Activated CD4-positive, alpha-beta T cell treated with anti-CD3 and anti-CD28 coated beads, Interleukin-2, amount 10 ng/mL, durations not matched to agents 24 days and 14 days (primary cell): ENCODE measurements at regions of chr5 and their contacts with region 1.

Region 1: DNA sequence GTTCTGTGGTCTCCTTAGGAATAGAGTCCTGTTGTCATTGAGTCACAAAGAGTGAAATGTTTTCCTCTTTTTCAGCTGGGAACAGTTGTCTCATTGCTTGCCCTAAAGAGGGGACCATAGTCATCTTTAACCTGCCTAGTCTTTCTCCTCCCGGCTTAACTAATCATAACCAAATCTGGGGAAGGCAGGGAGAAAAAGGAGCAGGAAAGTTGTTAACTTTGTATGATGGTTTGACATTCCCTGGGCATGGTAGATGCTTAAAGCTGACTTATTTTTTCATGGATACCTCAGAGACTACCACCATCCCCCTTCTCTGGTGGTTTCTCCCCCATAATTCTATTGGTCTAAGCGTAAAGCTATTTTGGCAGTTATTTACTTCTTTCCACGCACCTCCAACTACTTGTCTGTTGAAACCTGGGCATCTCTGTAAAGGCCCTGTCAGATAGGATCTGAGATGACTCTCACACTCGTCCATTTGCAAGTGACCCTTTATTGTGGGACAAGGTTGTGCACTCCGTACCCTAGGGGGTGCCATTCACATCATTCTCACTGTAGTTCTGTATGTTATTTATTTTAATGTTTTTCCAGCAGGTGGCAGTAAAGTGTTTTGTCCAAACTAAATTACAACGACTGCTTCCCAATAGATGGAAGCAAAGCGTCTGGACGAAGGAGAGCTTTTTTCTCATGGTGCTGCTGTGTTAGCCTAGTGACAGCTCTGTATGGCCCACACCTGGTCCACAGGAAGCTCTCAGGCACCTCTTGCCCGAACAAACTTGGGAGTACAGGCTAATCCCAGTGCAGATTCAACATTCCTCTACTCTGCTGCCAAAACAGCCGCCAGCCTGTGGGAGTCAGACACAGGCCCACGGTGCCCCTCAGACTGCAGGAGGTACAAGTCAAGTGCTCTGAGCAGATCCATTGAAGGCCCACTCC is 3.0 kb upstream of the FAM13B start:
- DNase-seq: peak; percentile 90
- H3K4me3 Mint-ChIP-seq: peak overlapping the region; percentile 1
- H3K27ac Mint-ChIP-seq: no peak overlapping the region
- H3K4me1 Mint-ChIP-seq: peaks cover 23% of the 10 kb centered on the region
- H3K27me3 Mint-ChIP-seq: no peaks in the 10 kb centered on the region

Region 2: GRCh38 chr5:137888857-137889759 is 146.8 kb before region 1 on chr5 and contains the start of gene PKD2L2:
- intact Hi-C with region 1: loop called (anchors 2 kb)
- DNase-seq: peak; percentile 94
- H3K4me3 Mint-ChIP-seq: peak within 1 kb of the TSS; percentile 88
- H3K27ac Mint-ChIP-seq: peak within 1 kb of the TSS; percentile 90
- H3K4me1 Mint-ChIP-seq: peaks cover 15% of the 10 kb centered on the region
- H3K27me3 Mint-ChIP-seq: peaks cover 4% of the 10 kb centered on the region
- total RNA-seq, gene PKD2L2: not detected in 2 replicates

Region 3: GRCh38 chr5:137997726-137998213 is 38.1 kb before region 1 on chr5:
- intact Hi-C with region 1: loop called (anchors 5 kb)
- DNase-seq: no peak
- H3K4me3 Mint-ChIP-seq: peak overlapping the region; percentile 28
- H3K27ac Mint-ChIP-seq: peak overlapping the region; percentile 92
- H3K4me1 Mint-ChIP-seq: peaks cover 31% of the 10 kb centered on the region
- H3K27me3 Mint-ChIP-seq: no peaks in the 10 kb centered on the region

Region 4: GRCh38 chr5:138067945-138068344 is 32.1 kb after region 1 on chr5:
- intact Hi-C with region 1: loop called (anchors 1 kb)
- DNase-seq: no peak
- H3K4me3 Mint-ChIP-seq: no peak overlapping the region
- H3K27ac Mint-ChIP-seq: no peak overlapping the region
- H3K4me1 Mint-ChIP-seq: peaks cover 6% of the 10 kb centered on the region
- H3K27me3 Mint-ChIP-seq: no peaks in the 10 kb centered on the region

Region 5: GRCh38 chr5:138128334-138128733 is 92.5 kb after region 1 on chr5:
- intact Hi-C with region 1: loop called (anchors 1 kb)
- DNase-seq: no peak
- H3K4me3 Mint-ChIP-seq: no peak overlapping the region
- H3K27ac Mint-ChIP-seq: no peak overlapping the region
- H3K4me1 Mint-ChIP-seq: no peaks in the 10 kb centered on the region
- H3K27me3 Mint-ChIP-seq: peaks cover 12% of the 10 kb centered on the region

Region 6: DNA sequence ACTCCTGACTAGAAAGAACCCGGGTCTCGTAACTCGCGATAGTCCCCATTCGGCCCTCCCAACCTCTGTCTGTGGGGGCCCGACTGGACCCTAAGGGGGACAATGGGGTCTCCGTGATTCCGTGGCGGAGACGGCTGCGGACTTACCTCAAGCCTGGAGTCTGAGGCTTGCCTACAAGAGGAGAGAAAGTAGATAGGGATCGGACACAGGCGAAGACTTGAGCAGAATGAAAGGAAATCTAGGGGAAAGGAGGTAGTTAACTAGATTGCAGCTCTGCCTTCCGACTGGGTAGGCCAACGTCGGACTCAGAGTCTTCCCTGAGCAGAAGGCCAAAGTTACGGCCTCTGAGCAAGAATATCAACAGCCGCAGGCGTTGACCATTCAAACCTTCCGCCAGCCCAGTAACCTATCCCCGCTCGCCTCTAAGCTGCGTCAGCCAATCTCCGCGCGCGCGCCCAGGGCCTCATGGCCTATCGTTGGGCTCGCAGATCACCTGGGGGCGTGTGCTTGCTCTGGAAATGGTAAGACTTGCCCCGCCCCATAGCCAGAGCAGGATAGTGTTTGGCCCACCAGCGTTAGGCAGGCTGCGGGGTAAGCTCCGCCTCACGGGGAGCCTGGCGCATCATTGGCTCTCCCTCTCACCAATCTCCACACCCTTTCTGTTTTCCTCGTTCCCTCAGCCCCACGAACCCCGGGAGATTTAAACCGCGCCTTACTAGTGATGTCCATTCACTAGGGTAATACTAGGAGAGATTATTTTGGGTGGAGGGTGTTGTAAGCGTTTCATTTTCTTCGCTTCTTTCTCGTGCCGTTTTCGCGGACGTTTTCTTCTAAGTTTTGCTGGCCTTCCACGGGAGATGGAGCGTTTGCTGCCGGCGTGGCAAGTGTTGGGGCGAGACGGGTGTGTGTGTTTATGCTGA is 295.8 kb after region 1 on chr5 and contains the start of gene CDC25C:
- intact Hi-C with region 1: loop called (anchors 10 kb)
- DNase-seq: peak; percentile 99
- H3K4me3 Mint-ChIP-seq: peak within 1 kb of the TSS; percentile 89
- H3K27ac Mint-ChIP-seq: peak within 1 kb of the TSS; percentile 57
- H3K4me1 Mint-ChIP-seq: peaks cover 30% of the 10 kb centered on the region
- H3K27me3 Mint-ChIP-seq: no peaks in the 10 kb centered on the region
- total RNA-seq, gene CDC25C: 6.7 and 7.9 TPM in 2 replicates

Region 7: DNA sequence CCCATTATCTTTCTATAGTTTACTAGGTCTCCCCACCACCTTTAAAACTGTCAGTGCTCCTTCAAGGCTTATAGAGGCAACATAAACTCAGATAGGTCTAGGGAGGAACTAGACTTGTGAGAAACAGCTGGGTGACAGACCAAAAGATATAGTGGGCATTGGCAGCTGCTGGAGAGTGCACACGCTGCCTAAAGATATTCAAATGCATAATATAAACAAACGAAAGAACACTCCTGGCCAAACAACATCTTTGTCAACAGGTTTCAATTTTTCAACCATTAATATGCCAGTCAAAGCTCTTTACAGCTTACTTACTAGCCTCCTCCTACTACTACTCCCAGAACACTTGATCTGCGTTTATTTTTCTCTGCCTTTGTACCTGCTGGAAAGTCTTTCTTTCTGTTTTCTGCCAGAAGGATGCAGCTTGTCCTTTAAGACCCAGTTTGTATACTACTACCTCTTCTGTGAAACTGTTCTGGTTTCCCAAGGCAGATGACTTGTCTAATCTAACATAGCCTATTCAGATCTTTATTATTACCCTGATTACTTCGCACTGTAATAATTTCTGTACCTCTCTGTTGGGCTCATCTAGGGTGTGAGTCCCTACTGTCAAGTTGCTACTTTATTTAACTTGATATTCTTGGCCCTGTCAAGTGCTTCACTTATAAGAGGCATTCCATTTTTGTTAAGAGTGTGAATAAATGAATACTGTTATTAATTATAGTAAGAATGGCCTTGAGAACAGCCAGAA is 330.9 kb after region 1 on chr5:
- intact Hi-C with region 1: no loop called
- DNase-seq: no peak
- H3K4me3 Mint-ChIP-seq: no peak overlapping the region
- H3K27ac Mint-ChIP-seq: no peak overlapping the region
- H3K4me1 Mint-ChIP-seq: peaks cover 18% of the 10 kb centered on the region
- H3K27me3 Mint-ChIP-seq: no peaks in the 10 kb centered on the region